ENCODE measurements at regions of chr4 and their contacts with region 1.

Region 1: DNA sequence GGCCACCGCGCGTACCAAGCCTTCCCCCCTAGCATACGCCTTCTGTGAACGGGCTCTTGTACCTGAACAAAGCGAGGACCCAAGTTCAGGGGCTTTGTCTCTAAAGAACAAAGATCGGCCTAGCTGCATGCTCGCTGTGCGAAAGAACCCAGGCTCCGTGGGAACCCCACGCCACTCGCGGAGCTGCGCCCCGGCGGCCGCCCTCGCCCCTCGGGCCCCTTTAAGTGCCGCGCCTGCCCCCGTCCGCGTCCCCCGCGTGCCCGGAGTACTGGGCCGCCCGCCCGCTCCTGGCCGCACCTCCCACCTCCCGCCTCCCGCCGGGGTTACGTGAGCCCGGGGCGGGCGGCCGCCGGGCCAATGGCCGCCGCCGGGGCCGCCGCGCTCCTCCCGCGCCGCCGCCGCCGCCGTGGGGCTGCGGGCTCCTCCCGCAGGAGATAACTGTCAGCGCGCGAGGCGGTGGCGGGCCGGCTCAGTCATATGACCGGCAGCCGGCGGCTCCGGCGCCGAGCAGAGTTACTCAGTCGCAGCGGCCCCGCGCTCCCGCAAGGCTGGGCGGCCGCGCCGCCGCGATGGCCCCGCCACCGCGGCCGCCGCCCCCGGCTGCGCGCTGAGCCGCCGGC is at the start of gene FNIP2:
- DNase-seq: peak; percentile 76
- H3K4me3 Mint-ChIP-seq: peak within 1 kb of the TSS; percentile 100
- H3K27ac Mint-ChIP-seq: peak within 1 kb of the TSS; percentile 98
- H3K4me1 Mint-ChIP-seq: peaks cover 54% of the 10 kb centered on the region
- H3K27me3 Mint-ChIP-seq: peaks cover 2% of the 10 kb centered on the region
- total RNA-seq, gene FNIP2: 18.8 and 20.4 TPM in 2 replicates

Region 2: DNA sequence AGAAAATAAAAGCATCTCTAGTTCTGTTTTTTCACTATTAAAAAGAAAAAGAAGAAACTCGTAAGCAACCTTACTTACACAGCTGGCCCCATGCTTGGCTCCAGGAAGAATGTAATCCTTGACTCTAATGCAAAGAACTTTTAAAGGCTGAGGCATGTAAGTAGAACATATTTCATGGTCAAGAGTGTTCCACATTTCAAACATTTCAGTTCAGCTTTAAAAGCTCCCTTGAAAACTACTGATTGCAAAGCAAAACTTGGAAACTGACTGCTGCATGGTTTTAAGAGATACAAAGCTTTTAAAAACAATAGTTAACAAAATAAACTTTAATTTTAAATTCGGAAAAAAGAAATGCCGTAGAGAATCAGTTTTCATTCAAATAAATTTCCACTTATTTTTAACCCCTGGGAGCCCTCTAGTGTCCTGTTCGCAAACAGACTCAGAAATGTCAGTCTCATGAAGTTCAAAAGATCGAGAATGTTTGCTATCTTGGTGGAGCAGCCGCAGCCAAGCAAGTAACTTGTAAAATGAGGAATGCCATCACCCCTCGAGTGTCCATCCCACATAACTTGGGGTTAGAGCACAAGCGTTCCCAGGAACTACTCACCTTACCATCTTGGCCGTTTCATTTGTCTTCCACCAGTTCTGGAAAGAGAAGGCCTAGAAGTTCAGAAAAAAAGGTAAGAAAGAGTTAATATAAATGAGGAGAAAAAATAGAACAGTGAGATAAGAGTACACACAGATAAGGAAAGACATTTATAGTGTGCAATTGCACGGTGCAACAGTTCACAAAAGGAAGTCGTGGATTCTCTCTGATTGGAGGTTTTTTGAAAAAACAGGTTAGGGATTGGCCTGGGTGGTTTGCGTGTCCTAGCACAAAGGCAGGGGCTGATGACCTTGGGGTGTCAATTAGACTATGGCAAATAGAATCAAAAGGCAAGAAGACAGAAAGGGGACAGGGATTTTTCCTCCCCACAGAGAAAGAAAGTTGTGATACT is 596.1 kb before region 1 on chr4 and contains the start of gene GASK1B:
- intact Hi-C with region 1: no loop called
- DNase-seq: no peak
- H3K4me3 Mint-ChIP-seq: no peak within 1 kb of the TSS
- H3K27ac Mint-ChIP-seq: no peak within 1 kb of the TSS
- H3K4me1 Mint-ChIP-seq: no peaks in the 10 kb centered on the region
- H3K27me3 Mint-ChIP-seq: peaks cover 39% of the 10 kb centered on the region
- total RNA-seq, gene GASK1B: not detected in 2 replicates

Region 3: GRCh38 chr4:158722917-158723793 is 45.5 kb before region 1 on chr4 and contains the start of gene PPID:
- intact Hi-C with region 1: loop called (anchors 1 kb)
- DNase-seq: peak; percentile 80
- H3K4me3 Mint-ChIP-seq: peak within 1 kb of the TSS; percentile 95
- H3K27ac Mint-ChIP-seq: peak within 1 kb of the TSS; percentile 100
- H3K4me1 Mint-ChIP-seq: peaks cover 59% of the 10 kb centered on the region
- H3K27me3 Mint-ChIP-seq: peaks cover 5% of the 10 kb centered on the region
- total RNA-seq, gene PPID: 52.8 and 55.4 TPM in 2 replicates

Region 4: DNA sequence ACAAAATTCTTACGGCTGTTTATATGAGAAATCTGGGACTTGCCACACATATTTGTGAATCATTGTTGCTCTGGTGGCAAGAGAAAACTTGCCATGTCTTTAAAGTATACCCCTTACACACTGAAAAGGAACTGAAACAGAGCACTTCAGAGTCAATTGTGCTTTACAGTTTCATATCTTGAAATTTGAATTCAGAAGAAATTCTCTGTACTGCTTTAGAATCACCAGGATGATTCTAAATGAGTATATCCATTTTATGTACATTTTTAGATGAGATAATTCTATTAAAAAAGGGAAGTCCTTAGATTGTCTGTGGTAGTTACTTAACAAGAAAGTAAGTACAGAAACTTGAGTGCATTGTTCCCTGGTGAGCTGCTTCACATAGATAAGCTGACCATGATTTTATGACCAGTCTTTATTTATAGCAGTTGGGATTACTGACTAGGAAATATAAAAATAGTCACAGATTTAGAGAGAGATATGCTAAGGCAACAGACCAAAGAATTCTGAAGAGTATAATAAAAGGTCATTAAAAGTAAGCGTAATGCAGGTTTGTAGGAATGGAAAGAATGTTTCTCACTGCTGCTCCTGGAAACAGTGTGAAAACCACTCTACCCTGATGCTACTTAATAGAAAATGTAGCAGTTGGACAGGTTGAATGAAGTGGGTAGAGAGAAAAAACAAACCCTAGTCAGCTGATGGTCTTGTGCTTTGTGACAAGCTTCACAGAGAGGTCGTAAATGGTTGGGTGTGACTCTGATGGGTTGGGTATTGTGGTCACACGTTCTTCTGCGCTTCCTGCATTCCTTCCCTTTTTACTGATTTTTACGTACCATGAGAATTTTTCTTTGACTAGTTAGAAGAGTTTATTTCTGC is 41.2 kb after region 1 on chr4:
- intact Hi-C with region 1: loop called (anchors 1 kb)
- DNase-seq: no peak
- H3K4me3 Mint-ChIP-seq: peak overlapping the region; percentile 68
- H3K27ac Mint-ChIP-seq: peak overlapping the region; percentile 83
- H3K4me1 Mint-ChIP-seq: peaks cover 61% of the 10 kb centered on the region
- H3K27me3 Mint-ChIP-seq: peaks cover 2% of the 10 kb centered on the region

Region 5: GRCh38 chr4:158850800-158851644 is 82.4 kb after region 1 on chr4:
- intact Hi-C with region 1: loop called (anchors 1 kb)
- DNase-seq: no peak
- H3K4me3 Mint-ChIP-seq: no peak overlapping the region
- H3K27ac Mint-ChIP-seq: no peak overlapping the region
- H3K4me1 Mint-ChIP-seq: peaks cover 14% of the 10 kb centered on the region
- H3K27me3 Mint-ChIP-seq: no peaks in the 10 kb centered on the region

Region 6: GRCh38 chr4:158958489-158959270 is 190.0 kb after region 1 on chr4:
- intact Hi-C with region 1: no loop called
- DNase-seq: no peak
- H3K4me3 Mint-ChIP-seq: no peak overlapping the region
- H3K27ac Mint-ChIP-seq: no peak overlapping the region
- H3K4me1 Mint-ChIP-seq: no peaks in the 10 kb centered on the region
- H3K27me3 Mint-ChIP-seq: peaks cover 7% of the 10 kb centered on the region

Region 7: GRCh38 chr4:159097785-159098184 is 329.1 kb after region 1 on chr4:
- intact Hi-C with region 1: loop called (anchors 1 kb)
- DNase-seq: no peak
- H3K4me3 Mint-ChIP-seq: no peak overlapping the region
- H3K27ac Mint-ChIP-seq: no peak overlapping the region
- H3K4me1 Mint-ChIP-seq: peaks cover 26% of the 10 kb centered on the region
- H3K27me3 Mint-ChIP-seq: peaks cover 9% of the 10 kb centered on the region

Measured in activated T-helper 1 cell treated with anti-CD3 and anti-CD28 coated beads, Interleukin-12 subunit alpha, Interleukin-12 subunit beta, Interleukin-2, Interleukin-4 antibody, amounts not matched to agents 30 ng/mL and 10 ng/mL and 1 ng/mL, durations not matched to agents 14 hours and 24 hours and 36 hours (primary cell).